CD4-positive, alpha-beta memory T cell (primary cell): ENCODE measurements at regions of chr15 and their contacts with region 1.

Region 1: GRCh38 chr15:67240235-67241131 is 14.0 kb downstream of the AAGAB start:
- DNase-seq: peak; percentile 27 to 46 (median 40)
- H3K4me3 ChIP-seq: peak overlapping the region in 1 of 2 donors; percentile 46
- H3K4me3 Mint-ChIP-seq: peak overlapping the region; percentile 43 to 88 (median 62)
- H3K27ac ChIP-seq: peak overlapping the region; percentile 53
- H3K27ac Mint-ChIP-seq: peak overlapping the region; percentile 78 to 93 (median 87)
- H3K4me1 ChIP-seq: peaks cover 45% of the 10 kb centered on the region
- H3K4me1 Mint-ChIP-seq: peaks cover 44 to 61% (median 44%) of the 10 kb centered on the region in 4 donors
- H3K27me3 ChIP-seq: no peaks in the 10 kb centered on the region
- H3K27me3 Mint-ChIP-seq: no peaks in the 10 kb centered on the region

Region 2: DNA sequence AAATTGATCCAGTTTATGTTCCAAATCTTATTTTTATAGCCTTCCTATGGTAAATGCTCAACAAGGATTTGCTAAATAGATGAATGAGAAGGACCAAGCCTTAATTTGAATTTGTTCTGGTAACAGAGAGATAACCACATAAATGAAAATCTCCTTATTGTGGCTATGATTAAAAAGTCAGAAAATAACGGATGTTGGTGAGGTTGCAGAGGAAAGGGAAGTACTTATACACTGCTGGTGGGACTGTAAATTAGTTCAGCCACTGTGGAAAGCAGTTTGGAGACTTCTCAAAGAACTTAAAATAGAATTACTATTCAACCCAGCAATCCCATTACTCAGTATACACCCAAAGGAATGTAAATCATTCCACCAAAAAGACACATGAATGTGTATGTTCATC is 12.2 kb before region 1 on chr15:
- CTCF ChIA-PET with region 1: interaction called, 14 read pairs
- POLR2A ChIA-PET with region 1: no interaction called
- intact Hi-C with region 1: no loop called
- DNase-seq: peak in 2 of 5 donors; percentile 14
- H3K4me3 ChIP-seq: no peak overlapping the region
- H3K4me3 Mint-ChIP-seq: no peak overlapping the region
- H3K27ac ChIP-seq: no peak overlapping the region
- H3K27ac Mint-ChIP-seq: peak overlapping the region in 2 of 7 donors; percentile 44 to 48
- H3K4me1 ChIP-seq: peaks cover 13% of the 10 kb centered on the region
- H3K4me1 Mint-ChIP-seq: peaks cover 13 to 28% (median 14%) of the 10 kb centered on the region in 4 donors
- H3K27me3 ChIP-seq: no peaks in the 10 kb centered on the region
- H3K27me3 Mint-ChIP-seq: no peaks in the 10 kb centered on the region

Region 3: DNA sequence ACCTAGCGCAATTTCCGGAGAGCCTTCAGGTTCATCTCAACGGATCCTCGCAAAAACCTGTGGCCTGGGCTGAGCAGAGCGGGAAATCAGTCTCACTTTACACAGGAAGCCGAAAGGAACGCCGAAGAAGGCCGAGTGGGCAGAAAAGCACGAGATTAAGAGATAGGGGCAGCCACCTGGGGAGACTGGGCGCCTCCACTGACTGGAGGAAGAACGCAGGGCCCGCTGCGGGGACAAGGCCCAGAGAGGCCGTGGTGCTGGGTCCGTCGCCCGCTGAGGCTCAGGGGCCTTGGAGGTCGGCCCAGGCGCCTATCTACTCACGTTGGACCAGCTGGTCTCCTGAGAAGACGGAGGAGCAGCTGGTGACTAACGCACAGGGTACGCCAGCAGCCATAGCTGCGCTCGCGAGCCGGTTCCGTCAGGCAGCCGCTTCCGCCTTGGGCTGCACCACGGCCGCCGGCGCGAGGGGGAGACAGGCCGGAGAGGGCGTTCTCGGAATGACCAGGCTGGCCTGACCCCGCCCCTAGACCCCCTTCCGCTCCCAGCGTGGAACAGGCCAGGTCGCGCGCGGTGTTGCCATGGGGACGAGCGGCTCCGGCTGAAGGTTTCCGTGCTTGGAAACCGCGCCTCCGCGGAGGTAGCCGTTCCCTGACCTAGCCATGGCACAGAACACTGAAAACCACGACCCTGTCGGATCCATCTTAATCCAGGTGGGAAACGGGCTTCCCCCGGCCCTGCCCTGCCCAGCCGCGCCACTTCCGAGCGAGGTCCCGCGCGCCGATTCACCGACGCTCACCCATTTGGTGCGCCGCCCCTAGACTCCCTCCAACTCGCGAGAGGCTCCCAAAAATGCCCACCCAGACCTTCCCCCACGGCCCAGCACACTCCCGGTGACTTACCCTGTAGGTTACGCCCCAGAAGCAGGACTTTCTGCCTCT is 14.0 kb after region 1 on chr15 and contains the starts of genes AAGAB and IQCH:
- CTCF ChIA-PET with region 1: interaction called, 14 read pairs
- POLR2A ChIA-PET with region 1: interaction called, 25 read pairs
- intact Hi-C with region 1: loop called (anchors 1 kb)
- DNase-seq: peak; percentile 93 to 97 (median 95)
- H3K4me3 ChIP-seq: peak within 1 kb of the TSS; percentile 96 to 98
- H3K4me3 Mint-ChIP-seq: peak within 1 kb of the TSS; percentile 96 to 99 (median 98)
- H3K27ac ChIP-seq: peak within 1 kb of the TSS; percentile 85
- H3K27ac Mint-ChIP-seq: peak within 1 kb of the TSS; percentile 89 to 99 (median 96)
- H3K4me1 ChIP-seq: peaks cover 34% of the 10 kb centered on the region
- H3K4me1 Mint-ChIP-seq: peaks cover 26 to 54% (median 40%) of the 10 kb centered on the region in 4 donors
- H3K27me3 ChIP-seq: no peaks in the 10 kb centered on the region
- H3K27me3 Mint-ChIP-seq: no peaks in the 10 kb centered on the region
- total RNA-seq, gene AAGAB: 30.2 to 30.3 TPM
- total RNA-seq, gene IQCH: 1.1 to 2.1 TPM

Region 4: GRCh38 chr15:67303490-67304363 is 63.2 kb after region 1 on chr15:
- CTCF ChIA-PET with region 1: interaction called, 34 read pairs
- POLR2A ChIA-PET with region 1: interaction called, 7 read pairs
- intact Hi-C with region 1: loop called (anchors 1 kb)
- DNase-seq: peak; percentile 43 to 55 (median 52)
- H3K4me3 ChIP-seq: no peak overlapping the region
- H3K4me3 Mint-ChIP-seq: no peak overlapping the region
- H3K27ac ChIP-seq: no peak overlapping the region
- H3K27ac Mint-ChIP-seq: no peak overlapping the region
- H3K4me1 ChIP-seq: no peaks in the 10 kb centered on the region
- H3K4me1 Mint-ChIP-seq: no peaks in the 10 kb centered on the region
- H3K27me3 ChIP-seq: no peaks in the 10 kb centered on the region
- H3K27me3 Mint-ChIP-seq: peaks cover 2 to 3% of the 10 kb centered on the region in 2 donors

Region 5: DNA sequence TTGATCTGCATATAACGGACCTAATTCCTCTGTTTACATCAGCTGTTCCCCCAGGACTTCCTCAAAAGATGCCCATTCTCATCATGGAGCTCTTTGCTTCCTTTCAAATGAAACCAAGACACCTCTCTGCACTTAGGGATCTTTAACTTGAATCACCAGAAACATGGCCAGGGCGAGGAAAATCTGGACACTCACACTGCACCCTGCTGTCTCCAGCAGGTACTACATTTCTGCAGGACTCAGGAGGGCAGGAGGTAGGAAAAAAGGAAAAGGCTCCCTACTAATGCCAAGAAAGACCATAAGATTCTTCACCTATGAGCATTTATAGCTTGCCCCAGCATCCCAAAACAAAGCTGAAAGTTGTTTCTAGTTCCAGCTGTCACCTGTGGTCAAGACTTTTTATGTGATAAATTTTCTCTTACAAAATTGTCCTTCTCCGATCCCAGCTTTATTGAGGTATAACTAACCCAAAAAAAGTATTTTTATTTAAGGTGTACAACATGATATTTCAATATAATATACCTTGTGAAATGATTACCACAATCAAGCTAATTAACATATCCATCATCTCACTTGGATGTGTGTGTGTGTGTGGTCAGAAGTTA is 193.1 kb after region 1 on chr15:
- CTCF ChIA-PET with region 1: interaction called, 18 read pairs
- POLR2A ChIA-PET with region 1: no interaction called
- intact Hi-C with region 1: no loop called
- DNase-seq: peak in 1 of 5 donors; percentile 9
- H3K4me3 ChIP-seq: no peak overlapping the region
- H3K4me3 Mint-ChIP-seq: no peak overlapping the region
- H3K27ac ChIP-seq: no peak overlapping the region
- H3K27ac Mint-ChIP-seq: no peak overlapping the region
- H3K4me1 ChIP-seq: no peaks in the 10 kb centered on the region
- H3K4me1 Mint-ChIP-seq: no peaks in the 10 kb centered on the region
- H3K27me3 ChIP-seq: no peaks in the 10 kb centered on the region
- H3K27me3 Mint-ChIP-seq: no peaks in the 10 kb centered on the region